ENCODE measurements at regions of chr17 and their contacts with region 1.

Region 1: GRCh38 chr17:18944646-18945045 is 7.3 kb upstream of the SLC5A10 start:
- DNase-seq: no peak
- ATAC-seq: peak; percentile 79
- H3K4me3 Mint-ChIP-seq: no peak overlapping the region
- H3K27ac Mint-ChIP-seq: no peak overlapping the region
- H3K4me1 Mint-ChIP-seq: peaks cover 11% of the 10 kb centered on the region
- H3K27me3 Mint-ChIP-seq: peaks cover 32% of the 10 kb centered on the region
- CTCF ChIP-seq: no peak

Region 2: GRCh38 chr17:18904482-18904881 is 40.2 kb before region 1 on chr17:
- CTCF ChIA-PET with region 1: no interaction called
- POLR2A ChIA-PET with region 1: no interaction called
- intact Hi-C with region 1: loop called (anchors 5 kb)
- DNase-seq: no peak
- ATAC-seq: no peak
- H3K4me3 Mint-ChIP-seq: no peak overlapping the region
- H3K27ac Mint-ChIP-seq: no peak overlapping the region
- H3K4me1 Mint-ChIP-seq: peaks cover 34% of the 10 kb centered on the region
- H3K27me3 Mint-ChIP-seq: no peaks in the 10 kb centered on the region
- CTCF ChIP-seq: no peak